Right ventricle myocardium inferior (tissue), 1 donor: ENCODE measurements at regions of chr10 and their contacts with region 1.

Region 1: GRCh38 chr10:27155066-27155754 is at the start of gene MASTL:
- DNase-seq: peak; percentile 97
- ATAC-seq: peak; percentile 97
- total RNA-seq, gene MASTL: 1.5 TPM

Region 2: GRCh38 chr10:27041196-27041595 is 114.0 kb before region 1 on chr10:
- intact Hi-C with region 1: no loop called
- DNase-seq: no peak
- ATAC-seq: no peak

Region 3: DNA sequence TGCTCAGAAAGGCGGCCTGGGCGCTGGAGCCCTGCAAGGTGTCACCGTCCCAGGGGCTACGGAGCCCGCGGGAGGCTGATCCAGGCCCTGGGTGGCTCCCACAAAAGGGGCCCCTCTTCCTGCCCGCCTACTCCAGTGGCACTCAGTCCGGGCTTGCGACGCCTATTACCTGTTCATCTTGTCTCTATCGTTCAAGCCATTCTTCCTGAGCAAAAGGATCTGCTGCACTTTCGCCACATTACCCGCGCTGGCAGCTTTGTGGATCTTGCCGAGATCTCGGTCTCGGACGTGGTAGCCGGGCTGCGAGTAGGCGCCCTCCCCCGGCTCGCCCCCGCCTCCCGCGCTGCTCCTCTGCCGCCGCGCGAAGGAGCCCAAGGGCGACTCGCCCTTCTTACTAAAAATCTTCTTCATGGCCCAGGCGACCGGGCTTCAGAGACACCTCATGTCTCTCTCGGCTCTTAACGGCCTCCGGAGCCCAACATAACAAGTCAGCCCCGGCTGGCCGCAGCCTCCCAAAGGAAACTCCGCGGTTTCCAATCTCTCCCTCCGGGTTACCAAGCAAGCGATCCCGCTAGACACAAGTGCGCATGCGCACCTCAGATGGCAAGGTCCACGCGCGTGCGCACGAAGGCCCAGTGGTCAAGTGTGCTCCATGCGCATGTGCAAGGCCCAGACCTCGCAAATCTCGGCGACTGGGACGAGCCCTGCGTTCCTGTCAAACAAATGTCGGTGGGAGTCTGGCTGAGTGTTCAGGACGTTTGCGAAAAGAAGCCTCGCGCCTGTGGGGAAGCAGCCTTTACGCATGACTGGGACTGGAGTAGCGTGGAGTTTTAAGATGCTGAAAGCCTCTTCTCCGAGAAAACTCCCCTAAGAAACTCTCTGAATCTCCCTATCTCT is 55.0 kb before region 1 on chr10 and contains the start of gene ANKRD26:
- intact Hi-C with region 1: loop called (anchors 10 kb)
- DNase-seq: peak; percentile 100
- ATAC-seq: peak; percentile 96
- total RNA-seq, gene ANKRD26: 10.9 TPM

Region 4: DNA sequence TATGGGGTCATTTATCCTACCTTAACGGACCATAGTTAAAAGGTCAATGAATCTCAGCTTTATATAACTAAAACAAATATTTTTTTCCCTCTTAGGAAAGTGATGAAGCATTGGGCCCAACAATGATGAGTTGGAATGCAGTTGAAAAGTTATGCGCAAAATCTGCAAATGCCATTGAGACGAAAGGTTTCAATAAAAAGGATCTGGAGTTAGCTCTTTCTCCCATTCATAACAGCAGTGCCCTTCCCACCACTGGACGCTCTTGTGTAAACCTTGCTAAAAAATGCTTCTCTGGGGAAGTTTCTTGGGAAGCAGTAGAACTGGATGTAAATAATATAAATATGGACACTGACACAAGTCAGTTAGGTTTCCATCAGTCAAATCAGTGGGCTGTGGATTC is 14.6 kb after region 1 on chr10:
- intact Hi-C with region 1: no loop called
- DNase-seq: no peak
- ATAC-seq: no peak

Region 5: GRCh38 chr10:27241652-27242472 is 86.7 kb after region 1 on chr10:
- intact Hi-C with region 1: loop called (anchors 2 kb)
- DNase-seq: peak; percentile 97
- ATAC-seq: peak; percentile 93